ENCODE measurements at regions of chr20 and their contacts with region 1.

Region 1: GRCh38 chr20:37885593-37886503 is 17.1 kb upstream of the VSTM2L start:
- DNase-seq: no peak
- H3K4me3 ChIP-seq: no peak overlapping the region
- H3K27ac ChIP-seq: no peak overlapping the region
- H3K27me3 ChIP-seq: peaks cover 32% of the 10 kb centered on the region
- CTCF ChIP-seq: no peak

Region 2: DNA sequence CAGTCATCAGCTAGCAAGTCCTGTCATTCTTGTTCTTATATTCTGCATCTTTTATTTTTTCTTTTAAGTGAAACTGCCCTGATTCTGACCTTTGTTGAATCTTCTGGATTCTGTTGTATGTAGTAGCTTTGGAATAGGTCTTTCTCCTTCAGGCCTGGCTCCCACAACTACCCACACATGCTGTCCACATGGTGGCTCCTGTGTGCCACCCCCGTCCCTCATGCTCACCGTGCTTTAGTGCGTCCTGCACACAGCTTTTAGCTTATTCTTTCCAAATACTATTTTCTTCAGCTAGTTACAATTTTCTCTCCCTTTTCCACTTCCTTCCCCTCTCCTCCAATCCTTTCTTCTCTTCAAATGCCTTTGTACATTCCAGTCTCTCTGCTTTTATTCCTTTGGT is 130.2 kb before region 1 on chr20:
- CTCF ChIA-PET with region 1: no interaction called
- POLR2A ChIA-PET with region 1: no interaction called
- DNase-seq: no peak
- H3K4me3 ChIP-seq: no peak overlapping the region
- H3K27ac ChIP-seq: no peak overlapping the region
- H3K27me3 ChIP-seq: no peaks in the 10 kb centered on the region
- CTCF ChIP-seq: no peak

Region 3: GRCh38 chr20:37823286-37823980 is 62.4 kb before region 1 on chr20:
- CTCF ChIA-PET with region 1: no interaction called
- POLR2A ChIA-PET with region 1: interaction called, 10 read pairs
- DNase-seq: no peak
- H3K4me3 ChIP-seq: no peak overlapping the region
- H3K27ac ChIP-seq: peak overlapping the region; percentile 47
- H3K27me3 ChIP-seq: no peaks in the 10 kb centered on the region
- CTCF ChIP-seq: no peak

Measured in AG04450 (cell line).